ENCODE measurements at regions of chr16 and their contacts with region 1.

Region 1: GRCh38 chr16:86563489-86564345 is 2.9 kb upstream of the FOXC2 start:
- DNase-seq: peak; percentile 82 to 88
- ATAC-seq: peak; percentile 94 to 99 (median 96)
- H3K4me3 ChIP-seq: peak overlapping the region; percentile 20
- H3K27ac ChIP-seq: no peak overlapping the region
- H3K4me1 ChIP-seq: peaks cover 5% of the 10 kb centered on the region
- H3K27me3 ChIP-seq: peaks cover 3 to 74% (median 32%) of the 10 kb centered on the region in 3 donors
- CTCF ChIP-seq: peak; percentile 100

Region 2: DNA sequence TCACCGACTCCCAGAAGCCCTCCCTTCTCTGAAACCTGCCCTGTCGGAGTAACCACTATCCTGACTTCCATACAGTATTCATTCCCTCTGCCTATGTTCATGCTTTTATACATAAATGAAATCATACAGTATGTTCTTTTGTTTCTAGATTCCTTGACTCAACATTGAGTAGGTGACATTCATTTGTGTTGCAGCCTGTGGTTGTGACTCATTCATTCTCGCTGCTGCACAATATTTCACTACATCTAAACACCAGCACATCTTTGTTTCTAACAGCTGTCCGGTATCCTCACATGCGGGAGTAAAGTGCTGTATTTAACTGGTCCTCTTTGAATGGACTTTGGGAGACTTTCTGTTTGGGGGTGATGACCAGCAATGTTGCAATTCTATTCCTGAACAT is 188.4 kb before region 1 on chr16:
- intact Hi-C with region 1: no loop called
- DNase-seq: no peak
- ATAC-seq: no peak
- H3K4me3 ChIP-seq: no peak overlapping the region
- H3K27ac ChIP-seq: no peak overlapping the region
- H3K4me1 ChIP-seq: no peaks in the 10 kb centered on the region
- H3K27me3 ChIP-seq: peaks cover 0 to 7% (median 5%) of the 10 kb centered on the region in 3 donors
- CTCF ChIP-seq: no peak

Region 3: DNA sequence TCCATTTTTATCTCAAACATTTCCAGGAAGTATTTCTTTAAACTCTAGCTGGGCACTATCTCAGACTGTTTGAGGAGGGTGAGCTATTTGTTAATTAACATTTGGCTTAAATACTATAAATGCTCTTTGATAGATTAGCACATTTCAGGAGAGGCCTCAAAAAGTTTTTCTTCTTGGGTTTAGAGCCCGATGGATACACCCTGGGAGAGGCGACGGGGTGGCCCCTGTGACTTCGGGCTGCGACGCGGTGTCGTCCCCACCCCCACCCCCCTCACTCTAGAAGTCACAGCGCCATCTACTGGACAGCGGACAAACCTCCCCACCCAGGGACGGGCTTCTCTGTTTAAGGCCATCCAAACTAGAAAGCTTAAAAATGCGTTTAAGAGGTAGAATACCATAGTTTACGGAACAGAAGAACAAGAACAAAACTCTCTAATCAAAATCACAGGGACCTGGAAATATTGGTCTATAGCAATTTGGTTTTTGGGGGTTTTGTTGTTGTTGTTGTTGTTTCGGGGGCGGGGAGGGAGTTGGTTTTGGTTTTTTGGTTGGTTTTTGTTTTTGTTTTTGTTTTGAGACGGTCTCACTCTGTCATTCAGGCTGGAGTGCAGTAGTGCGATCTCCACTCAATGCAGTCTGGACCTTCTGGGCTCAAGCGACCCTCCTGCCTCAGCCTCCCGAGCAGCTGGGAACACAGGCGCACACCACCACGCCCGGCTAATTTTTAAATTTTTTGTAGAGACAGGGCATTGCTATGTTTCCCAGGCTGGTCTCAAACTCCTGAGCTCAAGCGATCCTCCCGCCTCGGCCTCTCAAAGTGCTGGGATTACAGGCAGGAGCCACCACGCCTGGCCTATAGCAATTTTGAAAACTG is 499.1 kb after region 1 on chr16:
- intact Hi-C with region 1: loop called (anchors 1 to 5 kb)
- DNase-seq: peak in 1 of 2 donors; percentile 62
- ATAC-seq: peak; percentile 66 to 93 (median 80)
- H3K4me3 ChIP-seq: no peak overlapping the region
- H3K27ac ChIP-seq: no peak overlapping the region
- H3K4me1 ChIP-seq: no peaks in the 10 kb centered on the region
- H3K27me3 ChIP-seq: peaks cover 0 to 60% (median 3%) of the 10 kb centered on the region in 3 donors
- CTCF ChIP-seq: peak; percentile 68

Measured in psoas muscle (tissue), 8 donors.